ENCODE measurements at regions of chr10 and their contacts with region 1.

Region 1: DNA sequence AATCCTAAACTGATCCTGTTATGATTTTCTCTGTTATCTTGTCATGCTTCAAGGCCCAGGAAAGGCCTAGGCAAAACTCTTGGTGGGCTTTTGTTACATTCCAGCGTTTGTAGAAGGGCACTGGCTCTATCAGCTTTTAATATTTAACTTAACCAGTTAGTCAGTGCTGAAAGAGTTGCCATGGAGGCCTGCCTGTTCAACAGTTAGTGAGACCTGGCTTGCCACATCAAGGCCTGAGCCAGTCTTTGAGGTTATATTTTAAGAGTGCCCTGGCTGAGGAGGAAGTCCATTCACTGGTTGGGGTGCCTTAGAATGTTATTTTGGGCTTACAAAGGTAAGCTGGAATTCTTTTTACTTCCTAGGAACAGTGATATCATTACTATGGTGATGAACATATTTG is 144.1 kb upstream of the NRG3 start:
- DNase-seq: no peak
- ATAC-seq: no peak
- H3K4me3 ChIP-seq: no peak overlapping the region
- H3K4me3 Mint-ChIP-seq: no peak overlapping the region
- H3K27ac ChIP-seq: no peak overlapping the region
- H3K27ac Mint-ChIP-seq: no peak overlapping the region
- H3K4me1 ChIP-seq: no peaks in the 10 kb centered on the region
- H3K4me1 Mint-ChIP-seq: peaks cover 0 to 25% (median 11%) of the 10 kb centered on the region in 7 donors
- H3K27me3 ChIP-seq: no peaks in the 10 kb centered on the region
- H3K27me3 Mint-ChIP-seq: no peaks in the 10 kb centered on the region

Region 2: GRCh38 chr10:83007510-83007909 is 1276.6 kb after region 1 on chr10:
- CTCF ChIA-PET with region 1: no interaction called
- POLR2A ChIA-PET with region 1: no interaction called
- intact Hi-C with region 1: loop called in 1 of 2 experiments (anchors 10 kb)
- DNase-seq: no peak
- ATAC-seq: no peak
- H3K4me3 ChIP-seq: no peak overlapping the region
- H3K4me3 Mint-ChIP-seq: no peak overlapping the region
- H3K27ac ChIP-seq: no peak overlapping the region
- H3K27ac Mint-ChIP-seq: no peak overlapping the region
- H3K4me1 ChIP-seq: no peaks in the 10 kb centered on the region
- H3K4me1 Mint-ChIP-seq: no peaks in the 10 kb centered on the region
- H3K27me3 ChIP-seq: no peaks in the 10 kb centered on the region
- H3K27me3 Mint-ChIP-seq: no peaks in the 10 kb centered on the region